ENCODE measurements at regions of chr3 and their contacts with region 1.

Region 1: DNA sequence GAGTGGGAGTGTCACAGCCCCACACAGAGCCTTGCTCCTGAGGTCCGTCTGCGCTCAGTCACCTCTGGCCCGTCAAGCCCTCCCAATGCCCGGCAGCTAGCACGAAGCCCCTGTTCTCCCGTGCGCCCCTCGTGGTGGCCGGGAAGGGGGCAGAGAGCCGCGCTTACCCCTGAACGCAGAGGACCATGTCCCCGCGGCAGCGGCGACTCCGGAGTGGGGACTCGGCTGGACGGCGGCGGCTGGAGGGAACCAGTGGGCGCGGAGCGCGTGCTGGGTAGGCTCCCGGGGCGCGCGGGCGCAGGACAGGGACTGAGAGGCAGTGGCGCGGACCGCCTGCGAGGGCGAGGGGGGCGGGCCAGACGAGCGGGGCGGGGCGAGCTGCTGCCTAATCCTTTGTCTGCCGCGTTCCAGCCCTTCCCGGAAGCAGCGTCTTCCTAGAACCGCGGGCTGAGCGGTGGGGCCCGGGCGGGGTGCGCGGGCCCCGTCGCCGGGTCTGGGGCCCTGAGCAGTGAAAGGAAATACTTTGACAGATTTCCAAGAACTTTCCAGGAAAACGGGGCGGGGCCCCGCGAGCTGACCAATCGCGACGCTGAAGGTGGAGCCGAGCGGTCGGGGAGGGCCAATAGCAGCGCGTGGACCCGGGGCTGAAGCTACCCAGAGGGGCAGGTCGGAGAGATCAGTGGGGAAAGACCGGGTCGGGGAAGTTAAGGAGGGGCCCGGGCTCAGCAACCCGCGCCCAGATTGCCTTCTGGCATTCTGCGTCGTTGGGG is at the start of gene CISH:
- DNase-seq: peak; percentile 91
- ATAC-seq: peak; percentile 82
- H3K4me3 ChIP-seq: peak within 1 kb of the TSS; percentile 81
- H3K27ac ChIP-seq: peak within 1 kb of the TSS; percentile 79
- H3K4me1 ChIP-seq: peaks cover 4% of the 10 kb centered on the region
- H3K27me3 ChIP-seq: no peaks in the 10 kb centered on the region
- CTCF ChIP-seq: peak; percentile 44
- POLR2A ChIP-seq: 0 out of 2 replicates have a peak, but pooled peaks have one; percentile 38
- RAD21 ChIP-seq: peak; percentile 31; the same call in 1 of the 2 replicates
- total RNA-seq, gene CISH: 0.83 and 0.90 TPM in 2 replicates

Region 2: DNA sequence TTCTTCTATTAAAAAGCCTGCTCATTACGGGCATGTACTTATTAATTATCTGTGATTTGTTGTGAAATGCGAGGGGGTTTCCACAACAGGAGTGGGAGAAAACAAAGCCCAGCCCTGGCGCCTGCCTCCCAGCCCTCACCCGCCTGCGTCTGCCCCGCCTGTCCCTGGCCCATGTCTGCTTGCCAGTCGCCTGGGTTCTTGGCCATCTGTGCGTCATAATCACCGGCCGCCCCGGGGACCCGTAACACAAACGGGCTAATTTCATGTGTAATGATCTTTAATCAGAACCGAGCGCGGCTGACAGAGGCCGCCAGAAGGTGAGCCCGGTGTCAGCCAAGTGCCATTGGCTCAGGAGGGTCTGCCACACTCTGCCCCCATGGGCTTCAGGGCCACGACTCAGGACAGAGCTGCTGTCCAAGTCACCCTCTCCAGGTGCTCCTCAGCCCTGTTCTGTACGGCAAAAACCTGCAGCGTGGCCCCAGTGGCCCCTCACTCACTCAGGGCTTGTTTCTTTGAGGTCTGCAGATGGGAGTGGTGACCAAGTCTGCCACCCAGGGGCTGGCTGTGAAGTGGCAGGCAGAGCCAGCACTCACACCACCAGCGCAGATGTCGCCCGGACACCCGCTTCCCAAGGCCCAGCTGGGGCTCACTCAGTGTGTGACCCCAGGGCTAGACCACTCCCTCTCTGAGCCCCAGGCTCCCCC is 223.5 kb before region 1 on chr3:
- CTCF ChIA-PET with region 1: no interaction called
- POLR2A ChIA-PET with region 1: no interaction called
- dilution Hi-C with region 1: no loop called
- in situ Hi-C with region 1: no loop called
- intact Hi-C with region 1: no loop called
- DNase-seq: no peak
- ATAC-seq: peak; percentile 64
- H3K4me3 ChIP-seq: no peak overlapping the region
- H3K27ac ChIP-seq: no peak overlapping the region
- H3K4me1 ChIP-seq: no peaks in the 10 kb centered on the region
- H3K27me3 ChIP-seq: peaks cover 63% of the 10 kb centered on the region
- CTCF ChIP-seq: 0 out of 2 replicates have a peak, but pooled peaks have one; percentile 22
- POLR2A ChIP-seq: no peak
- RAD21 ChIP-seq: peak; percentile 19; the same call in 1 of the 2 replicates

Region 3: DNA sequence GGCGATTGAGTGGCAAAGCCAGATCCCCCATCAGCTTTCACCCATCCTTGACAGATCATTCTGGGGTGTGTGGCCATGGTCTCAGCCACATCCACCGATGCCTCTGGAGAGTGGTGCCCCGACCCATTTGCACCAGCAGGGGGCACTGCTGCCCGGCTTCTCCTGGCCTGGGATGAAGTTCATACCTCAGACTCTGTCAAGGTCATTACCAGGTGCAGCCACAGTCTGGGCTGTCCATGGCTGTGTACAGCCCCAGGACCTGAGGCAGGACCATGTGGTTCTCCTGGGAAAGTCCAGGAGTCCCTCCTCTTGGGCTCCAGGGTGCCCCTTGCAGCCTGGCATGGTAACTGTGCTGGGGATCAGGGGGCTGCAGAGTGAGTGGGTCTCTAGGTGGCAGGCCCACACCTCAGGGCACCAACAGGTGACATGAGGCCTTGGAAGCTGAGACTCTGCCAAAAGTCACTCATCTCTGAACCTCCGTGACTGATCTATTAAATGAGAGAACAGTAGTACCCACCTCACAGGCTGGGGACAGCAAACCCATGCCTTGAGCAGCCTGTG is 175.5 kb before region 1 on chr3:
- CTCF ChIA-PET with region 1: no interaction called
- POLR2A ChIA-PET with region 1: no interaction called
- dilution Hi-C with region 1: no loop called
- in situ Hi-C with region 1: no loop called
- intact Hi-C with region 1: loop called (anchors 1 kb)
- DNase-seq: peak; percentile 3
- ATAC-seq: peak; percentile 96
- H3K4me3 ChIP-seq: no peak overlapping the region
- H3K27ac ChIP-seq: no peak overlapping the region
- H3K4me1 ChIP-seq: no peaks in the 10 kb centered on the region
- H3K27me3 ChIP-seq: peaks cover 59% of the 10 kb centered on the region
- CTCF ChIP-seq: peak; percentile 63
- POLR2A ChIP-seq: no peak
- RAD21 ChIP-seq: peak; percentile 77

Region 4: DNA sequence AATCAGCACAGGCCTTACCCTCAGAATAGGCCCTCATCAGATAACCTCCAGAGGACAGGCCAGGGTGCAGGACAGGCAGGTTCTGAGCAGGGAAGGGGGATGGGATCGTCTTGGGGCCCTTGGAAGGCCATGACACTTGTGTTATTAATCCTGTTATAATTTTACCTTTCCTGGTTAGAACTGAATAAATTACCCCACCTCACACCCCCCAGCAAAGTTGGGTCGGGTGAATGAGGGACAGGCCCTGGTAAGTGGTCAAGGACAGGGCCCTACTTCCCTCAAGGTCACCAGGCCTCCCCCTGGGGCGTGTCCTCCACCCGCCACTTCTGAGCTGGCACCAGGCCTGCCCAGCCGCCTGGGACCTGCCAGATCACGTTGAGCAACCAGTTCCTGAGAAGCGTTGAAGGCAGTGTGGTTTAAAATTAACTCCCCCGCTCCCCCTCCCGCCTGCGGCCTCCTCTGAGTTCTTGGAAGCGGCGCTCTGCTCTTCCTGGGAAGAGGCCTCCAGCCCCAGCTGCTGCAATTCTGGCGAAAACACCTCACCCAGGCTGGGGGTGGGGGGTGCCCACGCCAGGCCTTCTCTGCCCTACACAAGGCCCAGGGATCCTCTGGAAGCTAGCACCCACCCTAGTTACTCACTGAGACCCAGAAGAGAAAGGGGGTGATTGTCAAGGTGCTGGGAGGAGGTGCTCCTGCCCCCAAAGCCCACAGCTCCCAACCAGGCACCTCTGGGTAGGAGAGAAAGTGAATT is 10.6 kb before region 1 on chr3:
- CTCF ChIA-PET with region 1: interaction called, 9 read pairs
- POLR2A ChIA-PET with region 1: interaction called, 5 read pairs
- dilution Hi-C with region 1: no loop called
- in situ Hi-C with region 1: no loop called
- intact Hi-C with region 1: loop called (anchors 1 kb)
- DNase-seq: peak; percentile 95
- ATAC-seq: peak; percentile 73
- H3K4me3 ChIP-seq: no peak overlapping the region
- H3K27ac ChIP-seq: peak overlapping the region; percentile 97
- H3K4me1 ChIP-seq: peaks cover 22% of the 10 kb centered on the region
- H3K27me3 ChIP-seq: no peaks in the 10 kb centered on the region
- CTCF ChIP-seq: no peak
- POLR2A ChIP-seq: no peak
- RAD21 ChIP-seq: no peak

Region 5: GRCh38 chr3:51099794-51100535 is 488.3 kb after region 1 on chr3:
- CTCF ChIA-PET with region 1: interaction called, 4 read pairs
- POLR2A ChIA-PET with region 1: no interaction called
- dilution Hi-C with region 1: no loop called
- in situ Hi-C with region 1: no loop called
- intact Hi-C with region 1: loop called (anchors 1 kb)
- DNase-seq: peak; percentile 47
- ATAC-seq: peak; percentile 91
- H3K4me3 ChIP-seq: no peak overlapping the region
- H3K27ac ChIP-seq: no peak overlapping the region
- H3K4me1 ChIP-seq: no peaks in the 10 kb centered on the region
- H3K27me3 ChIP-seq: no peaks in the 10 kb centered on the region
- CTCF ChIP-seq: peak; percentile 80
- POLR2A ChIP-seq: no peak
- RAD21 ChIP-seq: peak; percentile 63

Region 6: GRCh38 chr3:51384726-51385473 is 773.3 kb after region 1 on chr3 and contains the start of gene MANF:
- CTCF ChIA-PET with region 1: interaction called, 3 read pairs
- POLR2A ChIA-PET with region 1: no interaction called
- dilution Hi-C with region 1: no loop called
- in situ Hi-C with region 1: no loop called
- intact Hi-C with region 1: loop called (anchors 2 kb)
- DNase-seq: peak; percentile 97
- ATAC-seq: peak; percentile 96
- H3K4me3 ChIP-seq: peak within 1 kb of the TSS; percentile 79
- H3K27ac ChIP-seq: peak within 1 kb of the TSS; percentile 92
- H3K4me1 ChIP-seq: peaks cover 6% of the 10 kb centered on the region
- H3K27me3 ChIP-seq: no peaks in the 10 kb centered on the region
- CTCF ChIP-seq: no peak
- POLR2A ChIP-seq: peak; percentile 97
- RAD21 ChIP-seq: no peak
- total RNA-seq, gene MANF: 65.4 and 78.9 TPM in 2 replicates

Region 7: GRCh38 chr3:51471775-51472652 is 860.4 kb after region 1 on chr3:
- CTCF ChIA-PET with region 1: no interaction called
- POLR2A ChIA-PET with region 1: no interaction called
- dilution Hi-C with region 1: no loop called
- in situ Hi-C with region 1: no loop called
- intact Hi-C with region 1: no loop called
- DNase-seq: no peak
- ATAC-seq: no peak
- H3K4me3 ChIP-seq: no peak overlapping the region
- H3K27ac ChIP-seq: no peak overlapping the region
- H3K4me1 ChIP-seq: no peaks in the 10 kb centered on the region
- H3K27me3 ChIP-seq: no peaks in the 10 kb centered on the region
- CTCF ChIP-seq: no peak
- POLR2A ChIP-seq: no peak
- RAD21 ChIP-seq: no peak

Region 8: GRCh38 chr3:51670823-51671733 is 1059.4 kb after region 1 on chr3 and contains the start of gene TEX264:
- CTCF ChIA-PET with region 1: no interaction called
- POLR2A ChIA-PET with region 1: no interaction called
- dilution Hi-C with region 1: no loop called
- in situ Hi-C with region 1: loop called (anchors 25 kb)
- intact Hi-C with region 1: loop called (anchors 10 kb)
- DNase-seq: peak; percentile 71
- ATAC-seq: peak; percentile 82
- H3K4me3 ChIP-seq: peak within 1 kb of the TSS; percentile 87
- H3K27ac ChIP-seq: peak within 1 kb of the TSS; percentile 79
- H3K4me1 ChIP-seq: peaks cover 12% of the 10 kb centered on the region
- H3K27me3 ChIP-seq: no peaks in the 10 kb centered on the region
- CTCF ChIP-seq: no peak
- POLR2A ChIP-seq: peak; percentile 55; the same call in 1 of the 2 replicates
- RAD21 ChIP-seq: no peak
- total RNA-seq, gene TEX264: 26.9 and 30.3 TPM in 2 replicates

Measured in IMR-90 (cell line).